Transverse colon (tissue), 4 donors: ENCODE measurements at regions of chr9 and their contacts with region 1.

Region 1: GRCh38 chr9:92360083-92360482 is 34.3 kb downstream of the CENPP start:
- DNase-seq: no peak
- H3K4me3 ChIP-seq: no peak overlapping the region
- H3K27ac ChIP-seq: peak overlapping the region in 3 of 4 donors; percentile 23 to 47 (median 37)
- H3K4me1 ChIP-seq: peaks cover 0 to 9% (median 1%) of the 10 kb centered on the region in 4 donors
- H3K27me3 ChIP-seq: no peaks in the 10 kb centered on the region
- CTCF ChIP-seq: no peak
- EP300 ChIP-seq: no peak
- POLR2A ChIP-seq: no peak

Region 2: DNA sequence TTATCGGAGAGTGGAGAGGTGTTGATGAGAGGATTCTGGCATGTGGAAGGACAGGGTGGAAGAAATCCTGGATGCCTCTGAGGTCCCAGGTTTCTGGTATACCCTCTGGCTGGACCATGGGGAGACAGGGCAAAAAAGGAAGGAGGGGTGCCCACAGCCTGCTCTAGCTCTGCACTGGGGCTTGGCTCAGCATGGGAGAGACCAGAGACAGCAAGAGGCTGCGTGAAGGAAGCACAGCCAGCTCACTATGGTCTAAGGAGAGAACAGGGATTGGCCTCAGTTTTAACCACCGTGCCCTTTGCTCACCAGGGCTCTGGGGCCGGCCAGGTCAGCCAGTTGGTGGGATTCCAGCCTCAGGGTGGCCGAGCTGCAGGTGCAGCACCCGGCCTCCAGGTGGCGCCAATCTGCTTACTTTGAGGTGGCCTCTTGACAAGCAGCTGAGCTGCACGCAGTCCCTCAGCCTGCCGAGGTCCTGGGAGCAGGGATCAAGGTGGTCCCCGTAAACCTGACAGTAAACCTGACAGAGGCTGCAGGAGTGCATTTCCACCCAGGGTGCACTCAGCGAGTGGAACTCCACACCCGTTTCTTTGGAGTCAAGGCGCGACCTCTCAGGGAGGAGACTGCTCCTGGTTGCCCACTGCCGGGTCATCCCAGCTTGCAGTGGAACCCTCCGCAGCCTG is 219.9 kb before region 1 on chr9:
- in situ Hi-C with region 1: no loop called
- intact Hi-C with region 1: no loop called
- DNase-seq: peak; percentile 78
- H3K4me3 ChIP-seq: peak overlapping the region in 1 of 4 donors; percentile 40
- H3K27ac ChIP-seq: no peak overlapping the region
- H3K4me1 ChIP-seq: peaks cover 0 to 15% (median 8%) of the 10 kb centered on the region in 4 donors
- H3K27me3 ChIP-seq: peaks cover 23% of the 10 kb centered on the region
- CTCF ChIP-seq: peak; percentile 82 to 95 (median 92)
- EP300 ChIP-seq: no peak
- POLR2A ChIP-seq: no peak

Region 3: GRCh38 chr9:92373167-92373566 is 13.1 kb after region 1 on chr9:
- in situ Hi-C with region 1: no loop called
- intact Hi-C with region 1: no loop called
- DNase-seq: no peak
- H3K4me3 ChIP-seq: no peak overlapping the region
- H3K27ac ChIP-seq: no peak overlapping the region
- H3K4me1 ChIP-seq: peaks cover 0 to 8% (median 0%) of the 10 kb centered on the region in 4 donors
- H3K27me3 ChIP-seq: no peaks in the 10 kb centered on the region
- CTCF ChIP-seq: no peak
- EP300 ChIP-seq: no peak
- POLR2A ChIP-seq: no peak

Region 4: DNA sequence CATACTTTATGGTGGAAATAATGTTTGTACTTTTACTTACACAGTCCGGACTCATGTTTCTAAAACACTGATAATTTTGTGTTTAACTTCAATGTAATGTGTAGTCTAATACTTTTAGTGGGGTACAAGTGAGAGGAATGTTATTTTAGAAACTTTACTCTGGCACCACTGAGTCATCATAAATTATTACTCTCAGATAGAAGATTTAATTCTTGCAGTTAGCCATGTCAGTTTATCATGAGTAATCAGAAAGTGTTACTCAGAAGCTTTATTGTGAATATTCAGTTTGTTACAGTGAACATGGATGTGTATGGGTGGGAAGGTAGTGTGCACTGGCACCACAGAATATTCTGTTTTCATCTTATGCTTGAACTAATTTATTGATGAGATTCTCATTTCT is 24.3 kb after region 1 on chr9:
- in situ Hi-C with region 1: no loop called
- intact Hi-C with region 1: loop called (anchors 1 kb)
- DNase-seq: no peak
- H3K4me3 ChIP-seq: no peak overlapping the region
- H3K27ac ChIP-seq: peak overlapping the region in 1 of 4 donors; percentile 1
- H3K4me1 ChIP-seq: peaks cover 0 to 13% (median 1%) of the 10 kb centered on the region in 4 donors
- H3K27me3 ChIP-seq: no peaks in the 10 kb centered on the region
- CTCF ChIP-seq: no peak
- EP300 ChIP-seq: no peak
- POLR2A ChIP-seq: no peak